ENCODE measurements at regions of chr5 and their contacts with region 1.

Region 1: GRCh38 chr5:132007399-132008165 is 3.9 kb downstream of the ACSL6 start:
- DNase-seq: peak; percentile 73 to 89
- H3K4me3 ChIP-seq: no peak overlapping the region
- H3K27ac ChIP-seq: no peak overlapping the region
- H3K4me1 ChIP-seq: peaks cover 3 to 29% (median 17%) of the 10 kb centered on the region in 4 experiments
- H3K27me3 ChIP-seq: peaks cover 5 to 26% (median 18%) of the 10 kb centered on the region in 4 experiments
- CTCF ChIP-seq: peak; percentile 45 to 98 (median 86)
- EP300 ChIP-seq: no peak
- POLR2A ChIP-seq: no peak
- RAD21 ChIP-seq: peak; percentile 94 to 97

Region 2: GRCh38 chr5:131423056-131423455 is 584.5 kb before region 1 on chr5:
- CTCF ChIA-PET with region 1: interaction called, 13 read pairs
- POLR2A ChIA-PET with region 1: no interaction called
- DNase-seq: no peak
- H3K4me3 ChIP-seq: no peak overlapping the region
- H3K27ac ChIP-seq: no peak overlapping the region
- H3K4me1 ChIP-seq: no peaks in the 10 kb centered on the region
- H3K27me3 ChIP-seq: no peaks in the 10 kb centered on the region
- CTCF ChIP-seq: peak in 2 of 3 experiments; percentile 47 to 53; a peak in 3 of 4 replicates
- EP300 ChIP-seq: no peak
- POLR2A ChIP-seq: no peak
- RAD21 ChIP-seq: peak; percentile 69 to 72

Region 3: DNA sequence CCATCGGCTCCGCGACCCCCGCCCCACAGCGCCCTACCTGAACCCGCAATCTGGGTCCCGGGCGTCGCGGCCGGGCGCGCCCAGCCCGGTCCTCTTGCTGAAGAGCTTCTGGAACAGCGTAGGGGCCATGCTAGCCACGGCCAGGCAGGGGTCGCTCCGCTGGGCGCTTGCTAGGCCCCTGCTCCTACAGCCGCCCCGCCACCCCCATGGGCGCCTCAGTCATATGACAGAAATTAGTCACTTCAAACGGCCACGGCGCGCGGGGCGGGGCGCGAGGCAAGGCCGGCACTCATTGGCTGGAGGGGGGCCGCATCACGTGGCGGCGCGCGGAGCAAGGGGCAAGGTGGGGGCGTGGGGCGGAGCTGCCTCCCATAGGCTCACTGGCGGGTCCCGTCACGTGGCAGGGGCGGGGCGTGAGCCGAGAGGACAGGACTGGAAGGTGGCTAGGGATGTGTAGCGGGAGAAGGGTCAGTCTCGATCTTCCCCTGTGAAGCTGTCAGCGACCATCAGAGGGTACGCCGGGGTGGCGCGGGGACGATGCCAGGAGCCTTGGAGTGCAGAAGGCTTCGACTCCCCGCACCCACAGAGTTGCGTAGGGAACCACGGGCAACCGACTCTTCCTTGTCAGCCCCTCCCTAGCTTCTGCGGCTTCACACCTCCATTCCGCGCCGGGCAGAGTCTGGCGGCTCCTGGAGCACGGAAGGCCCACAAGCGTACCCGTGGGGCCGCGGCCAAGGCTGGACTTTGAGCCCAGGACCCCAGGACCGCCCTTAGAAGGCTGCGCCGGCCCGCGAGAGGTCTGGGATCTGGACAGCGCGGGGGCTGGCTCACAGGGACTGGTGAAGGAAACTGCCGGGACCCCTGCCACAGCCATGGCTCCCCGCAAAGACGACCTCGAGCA is 210.5 kb before region 1 on chr5 and contains the start of gene FNIP1:
- CTCF ChIA-PET with region 1: interaction called, 20 read pairs
- POLR2A ChIA-PET with region 1: interaction called, 4 read pairs
- DNase-seq: peak; percentile 88 to 98
- H3K4me3 ChIP-seq: peak within 1 kb of the TSS; percentile 76 to 96 (median 89)
- H3K27ac ChIP-seq: peak within 1 kb of the TSS; percentile 68; the same call in 1 of the 2 replicates
- H3K4me1 ChIP-seq: 0 out of 7 replicates have a peak, but pooled peaks cover 0 to 1% (median 0%) of the 10 kb centered on the region in 4 experiments
- H3K27me3 ChIP-seq: peaks cover 0 to 3% (median 0%) of the 10 kb centered on the region in 4 experiments; a peak in 1 of 7 replicates
- CTCF ChIP-seq: peak in 1 of 3 experiments; percentile 10; a peak in 1 of 4 replicates
- EP300 ChIP-seq: peak in 1 of 2 experiments; percentile 39; a peak in 1 of 3 replicates
- POLR2A ChIP-seq: peak; percentile 72 to 78
- RAD21 ChIP-seq: peak in 1 of 2 experiments; percentile 3; a peak in 1 of 4 replicates
- total RNA-seq, gene FNIP1: 17.1 and 17.3 TPM in 2 replicates

Region 4: GRCh38 chr5:131810510-131811249 is 196.9 kb before region 1 on chr5:
- CTCF ChIA-PET with region 1: interaction called, 157 read pairs
- POLR2A ChIA-PET with region 1: interaction called, 3 read pairs
- DNase-seq: no peak
- H3K4me3 ChIP-seq: no peak overlapping the region
- H3K27ac ChIP-seq: no peak overlapping the region
- H3K4me1 ChIP-seq: 0 out of 7 replicates have a peak, but pooled peaks cover 0 to 2% (median 0%) of the 10 kb centered on the region in 4 experiments
- H3K27me3 ChIP-seq: no peaks in the 10 kb centered on the region
- CTCF ChIP-seq: peak in 2 of 3 experiments; percentile 53 to 64; a peak in 3 of 4 replicates
- EP300 ChIP-seq: no peak
- POLR2A ChIP-seq: no peak
- RAD21 ChIP-seq: peak; percentile 86 to 87

Region 5: DNA sequence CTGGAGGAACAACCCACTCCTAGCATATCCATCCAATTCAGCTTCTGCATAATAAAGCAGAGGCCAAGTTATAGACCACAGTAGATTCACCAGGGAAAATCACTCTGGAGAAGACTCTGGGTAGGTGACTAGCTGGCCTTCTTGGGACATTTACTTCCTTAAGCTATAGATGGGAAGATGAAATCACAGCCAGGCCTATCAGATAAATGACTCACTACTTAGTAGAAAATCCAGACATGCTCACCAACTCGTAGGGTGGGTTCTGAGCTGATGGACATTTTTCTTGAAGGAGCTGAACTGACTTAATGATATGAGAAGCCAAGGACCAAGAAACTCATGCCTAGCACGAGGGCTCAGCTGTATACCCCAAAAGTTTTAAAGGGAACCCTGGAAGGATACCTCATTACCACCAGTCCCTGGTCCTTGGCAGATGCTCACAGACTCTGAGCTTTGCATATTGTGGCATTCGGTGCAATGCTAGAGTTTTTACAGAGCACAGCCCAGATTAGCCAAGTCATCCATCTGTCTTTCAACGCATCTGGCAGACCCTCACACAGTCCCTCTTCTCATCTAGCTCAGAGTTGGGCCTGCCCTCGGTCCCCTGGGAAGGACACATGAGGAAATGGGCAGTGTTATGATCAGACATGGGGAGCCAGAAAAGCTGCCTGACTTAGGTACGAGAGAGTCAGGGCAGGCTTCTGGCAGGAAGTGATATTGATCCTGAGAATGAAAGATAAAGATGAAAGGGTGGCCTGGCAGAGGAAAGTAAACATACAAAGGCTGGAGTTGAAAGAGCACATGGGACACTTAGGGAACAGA is 11.2 kb before region 1 on chr5:
- CTCF ChIA-PET with region 1: interaction called, 23 read pairs
- POLR2A ChIA-PET with region 1: interaction called, 3 read pairs
- DNase-seq: no peak
- H3K4me3 ChIP-seq: no peak overlapping the region
- H3K27ac ChIP-seq: no peak overlapping the region
- H3K4me1 ChIP-seq: peaks cover 0 to 21% (median 12%) of the 10 kb centered on the region in 4 experiments; a peak in 6 of 7 replicates
- H3K27me3 ChIP-seq: no peaks in the 10 kb centered on the region
- CTCF ChIP-seq: no peak
- EP300 ChIP-seq: no peak
- POLR2A ChIP-seq: no peak
- RAD21 ChIP-seq: no peak

Region 6: GRCh38 chr5:132017738-132018625 is 10.4 kb after region 1 on chr5:
- CTCF ChIA-PET with region 1: interaction called, 10 read pairs
- POLR2A ChIA-PET with region 1: no interaction called
- DNase-seq: peak in 1 of 2 experiments; percentile 35
- H3K4me3 ChIP-seq: no peak overlapping the region
- H3K27ac ChIP-seq: no peak overlapping the region
- H3K4me1 ChIP-seq: no peaks in the 10 kb centered on the region
- H3K27me3 ChIP-seq: no peaks in the 10 kb centered on the region
- CTCF ChIP-seq: no peak
- EP300 ChIP-seq: no peak
- POLR2A ChIP-seq: no peak
- RAD21 ChIP-seq: no peak

Region 7: DNA sequence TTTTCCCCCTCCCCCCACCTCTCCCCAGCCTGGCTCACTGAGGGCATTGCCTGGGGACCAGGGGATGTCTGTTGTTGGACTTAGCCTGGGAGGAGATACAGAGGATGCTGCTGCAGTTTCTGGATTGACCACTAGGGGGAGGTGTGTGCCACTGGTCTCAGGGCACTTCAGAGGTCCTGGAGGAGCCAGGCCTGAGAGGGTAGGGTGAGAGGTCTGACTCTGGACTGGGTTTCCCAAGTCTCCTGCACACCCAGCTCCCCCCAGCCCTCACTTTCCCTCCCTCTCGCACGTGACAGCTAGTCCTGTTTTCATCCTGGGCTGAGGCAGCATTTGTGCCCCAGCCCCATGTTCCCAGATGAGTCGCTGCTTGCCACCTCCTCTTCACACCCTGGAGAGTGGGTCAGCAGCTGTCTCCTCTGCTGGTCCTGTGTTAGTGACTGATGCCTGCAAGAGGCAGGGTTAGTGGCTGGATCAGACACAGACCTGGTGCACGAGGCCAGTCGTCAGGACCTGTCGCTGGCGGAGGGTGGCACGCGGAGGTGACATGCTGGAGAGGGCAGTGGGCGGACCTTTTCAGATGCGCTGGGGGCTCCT is 57.3 kb after region 1 on chr5:
- CTCF ChIA-PET with region 1: interaction called, 35 read pairs
- POLR2A ChIA-PET with region 1: interaction called, 6 read pairs
- DNase-seq: peak; percentile 65 to 97
- H3K4me3 ChIP-seq: no peak overlapping the region
- H3K27ac ChIP-seq: no peak overlapping the region
- H3K4me1 ChIP-seq: no peaks in the 10 kb centered on the region; a peak in 1 of 7 replicates
- H3K27me3 ChIP-seq: no peaks in the 10 kb centered on the region
- CTCF ChIP-seq: peak in 2 of 3 experiments; percentile 88 to 98; a peak in 3 of 4 replicates
- EP300 ChIP-seq: no peak
- POLR2A ChIP-seq: no peak
- RAD21 ChIP-seq: peak; percentile 73 to 80